Pancreas (tissue), 10 donors: ENCODE measurements at regions of chr2 and their contacts with region 1.

Region 1: GRCh38 chr2:98269830-98270229 is 76.4 kb upstream of the CNGA3 start:
- DNase-seq: no peak
- ATAC-seq: no peak
- H3K4me3 ChIP-seq: no peak overlapping the region
- H3K27ac ChIP-seq: no peak overlapping the region
- H3K4me1 ChIP-seq: no peaks in the 10 kb centered on the region
- H3K27me3 ChIP-seq: no peaks in the 10 kb centered on the region
- CTCF ChIP-seq: no peak

Region 2: GRCh38 chr2:97806738-97807618 is 462.9 kb before region 1 on chr2:
- intact Hi-C with region 1: loop called in 1 of 3 experiments (anchors 10 kb)
- DNase-seq: peak; percentile 58 to 90 (median 77)
- ATAC-seq: peak; percentile 94 to 100 (median 99)
- H3K4me3 ChIP-seq: no peak overlapping the region
- H3K27ac ChIP-seq: no peak overlapping the region
- H3K4me1 ChIP-seq: no peaks in the 10 kb centered on the region
- H3K27me3 ChIP-seq: no peaks in the 10 kb centered on the region
- CTCF ChIP-seq: peak; percentile 63 to 93 (median 82)

Region 3: GRCh38 chr2:98295721-98296414 is 26.0 kb after region 1 on chr2:
- intact Hi-C with region 1: no loop called
- DNase-seq: no peak
- ATAC-seq: peak in 3 of 4 donors; percentile 21 to 70 (median 49)
- H3K4me3 ChIP-seq: no peak overlapping the region
- H3K27ac ChIP-seq: no peak overlapping the region
- H3K4me1 ChIP-seq: peaks cover 0 to 7% (median 5%) of the 10 kb centered on the region in 3 donors
- H3K27me3 ChIP-seq: no peaks in the 10 kb centered on the region
- CTCF ChIP-seq: no peak